GM10248 (cell line): ENCODE measurements at regions of chr4 and their contacts with region 1.

Region 1: GRCh38 chr4:143375313-143376073 is 38.8 kb downstream of the GAB1 start:
- DNase-seq: no peak
- CTCF ChIP-seq: peak; percentile 68

Region 2: GRCh38 chr4:143337600-143338287 is 37.7 kb before region 1 on chr4:
- CTCF ChIA-PET with region 1: interaction called, 13 read pairs
- POLR2A ChIA-PET with region 1: interaction called, 3 read pairs
- DNase-seq: no peak
- CTCF ChIP-seq: no peak

Region 3: GRCh38 chr4:143346206-143346605 is 29.3 kb before region 1 on chr4:
- CTCF ChIA-PET with region 1: interaction called, 13 read pairs
- POLR2A ChIA-PET with region 1: no interaction called
- DNase-seq: no peak
- CTCF ChIP-seq: no peak

Region 4: DNA sequence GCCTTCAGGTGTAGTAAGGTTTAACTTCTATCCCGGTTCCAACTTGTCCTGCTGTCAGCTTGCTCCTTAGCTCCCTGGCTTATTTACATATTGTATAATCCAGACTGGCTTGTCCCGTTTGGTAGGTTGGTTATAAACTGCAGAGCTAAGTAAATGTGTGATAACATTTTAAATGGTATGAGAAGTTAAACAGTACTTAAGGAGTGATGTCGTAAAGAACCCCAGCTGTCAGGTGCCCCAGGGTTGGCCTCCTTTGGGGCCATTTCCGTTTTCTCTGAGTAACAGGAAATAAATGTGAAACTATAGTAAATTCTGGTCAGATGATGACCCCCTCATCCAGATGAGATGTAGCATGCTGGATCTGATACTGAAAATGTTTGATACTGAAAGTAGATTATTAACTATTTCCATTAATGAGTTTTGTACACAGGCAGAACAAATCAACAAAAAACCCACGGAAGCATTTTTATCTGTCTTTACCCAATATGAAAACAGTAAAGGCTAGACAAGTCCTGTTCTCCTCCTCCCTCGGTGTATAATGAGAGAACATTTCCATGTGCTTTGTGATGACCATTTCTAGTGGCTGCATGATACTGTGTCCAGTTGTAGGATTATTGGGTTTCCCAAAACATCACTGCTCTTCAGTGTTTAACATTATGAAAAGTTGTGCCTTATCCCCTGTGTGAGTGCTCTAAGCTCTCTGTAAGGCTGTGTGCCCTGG is 16.4 kb before region 1 on chr4:
- CTCF ChIA-PET with region 1: interaction called, 21 read pairs
- POLR2A ChIA-PET with region 1: interaction called, 3 read pairs
- DNase-seq: peak; percentile 35
- CTCF ChIP-seq: no peak

Region 5: DNA sequence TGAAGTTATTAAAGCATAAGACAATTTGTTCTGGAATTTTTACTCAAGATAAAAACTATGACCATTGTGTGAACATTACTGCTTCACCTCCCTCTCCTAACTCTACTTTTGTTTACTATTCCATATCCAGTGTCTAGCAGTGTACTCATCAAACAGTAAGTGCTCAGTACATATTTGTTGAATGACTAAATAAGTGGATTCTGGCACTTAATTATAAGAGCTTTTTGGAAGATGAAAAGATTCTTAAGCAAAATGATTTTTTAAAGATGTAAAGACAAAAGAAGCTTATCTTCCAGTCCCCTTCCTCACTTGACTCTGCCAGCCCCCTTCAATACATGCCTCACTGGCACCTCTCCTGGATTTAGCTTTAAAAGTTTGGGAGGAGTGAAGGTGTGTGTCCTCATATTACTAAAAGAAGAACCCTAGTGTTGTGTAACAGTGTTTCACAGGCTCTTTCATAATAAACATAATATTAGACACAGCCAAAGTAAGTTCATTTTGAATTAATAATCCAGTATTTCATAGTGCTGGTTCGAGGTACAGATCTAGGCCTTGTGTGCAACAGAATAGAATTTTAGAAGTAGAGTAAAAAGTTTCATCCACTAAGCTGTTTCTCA is 14.2 kb after region 1 on chr4:
- CTCF ChIA-PET with region 1: interaction called, 44 read pairs
- POLR2A ChIA-PET with region 1: interaction called, 4 read pairs
- DNase-seq: no peak
- CTCF ChIP-seq: no peak

Region 6: GRCh38 chr4:143399113-143399949 is 23.8 kb after region 1 on chr4:
- CTCF ChIA-PET with region 1: interaction called, 44 read pairs
- POLR2A ChIA-PET with region 1: no interaction called
- DNase-seq: no peak
- CTCF ChIP-seq: peak; percentile 58